HAP-1 (cell line): ENCODE measurements at regions of chr10 and their contacts with region 1.

Region 1: GRCh38 chr10:110535958-110536891 is 31.3 kb upstream of the SMC3 start:
- DNase-seq: no peak
- H3K4me3 ChIP-seq: no peak overlapping the region
- H3K4me1 ChIP-seq: no peaks in the 10 kb centered on the region
- H3K27me3 ChIP-seq: peaks cover 36% of the 10 kb centered on the region

Region 2: DNA sequence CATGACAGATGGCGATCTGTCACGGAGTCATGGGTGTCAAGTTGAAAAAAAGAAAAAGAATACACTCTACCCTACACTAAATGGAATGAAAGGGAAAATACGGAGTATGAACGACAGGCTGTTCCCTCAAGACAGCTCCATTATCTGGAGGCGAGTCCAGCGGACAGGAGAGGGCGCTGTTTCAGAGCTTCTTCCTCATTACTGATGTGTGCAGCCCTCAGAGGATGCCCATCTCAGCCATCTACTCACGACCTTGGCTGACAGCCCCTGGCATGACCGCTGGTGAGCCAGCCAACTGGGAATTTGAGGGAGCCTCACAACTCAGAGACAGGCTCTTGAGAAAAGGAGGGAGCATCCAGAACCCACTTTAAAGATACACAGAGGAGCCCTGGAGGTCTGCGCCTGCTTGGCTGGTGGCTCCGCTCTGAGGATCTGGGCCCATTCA is 181.9 kb before region 1 on chr10:
- in situ Hi-C with region 1: loop called (anchors 25 kb)
- DNase-seq: peak; percentile 9 to 83
- H3K4me3 ChIP-seq: no peak overlapping the region
- H3K4me1 ChIP-seq: no peaks in the 10 kb centered on the region
- H3K27me3 ChIP-seq: no peaks in the 10 kb centered on the region